ENCODE measurements at regions of chr16 and their contacts with region 1.

Region 1: DNA sequence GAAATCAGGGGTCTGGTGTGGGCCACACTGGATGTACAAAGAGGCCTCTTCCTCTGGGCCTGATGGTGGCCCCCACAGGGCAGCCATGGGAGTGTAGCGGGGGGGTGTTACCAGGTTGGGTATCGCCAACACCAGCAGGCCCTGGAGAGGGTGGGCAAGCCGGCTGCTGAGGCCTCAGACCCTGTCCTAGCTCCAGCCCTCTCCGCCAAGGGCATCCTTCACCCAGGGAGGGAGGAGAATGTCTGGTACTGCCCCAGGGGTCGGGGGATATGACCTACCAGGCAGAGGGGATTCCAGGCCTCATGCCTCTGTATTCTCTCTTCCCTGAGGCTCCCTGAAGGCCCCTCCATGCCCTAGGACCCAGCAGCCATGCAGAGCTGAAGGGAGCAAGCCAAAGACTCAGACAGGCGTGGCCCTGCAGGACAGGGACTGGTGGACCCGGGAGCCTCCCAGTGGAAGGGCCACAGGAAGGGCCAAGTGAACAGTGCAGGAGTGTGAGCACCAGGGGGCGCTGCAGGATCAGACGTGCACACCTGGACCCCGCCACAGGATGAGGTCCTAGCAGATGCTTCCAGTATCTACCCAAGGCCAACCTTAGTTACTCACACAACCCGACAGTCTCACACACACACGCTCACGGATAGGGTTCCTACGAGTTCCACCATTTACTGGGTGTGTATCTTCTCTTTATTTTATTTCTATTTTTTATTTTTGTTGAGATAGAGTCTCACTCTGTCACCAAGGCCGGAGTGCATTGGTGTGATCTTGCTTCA is 10.9 kb upstream of the CES4A start:
- DNase-seq: peak; percentile 89 to 91
- H3K4me3 ChIP-seq: no peak overlapping the region
- H3K27ac ChIP-seq: no peak overlapping the region
- H3K4me1 ChIP-seq: peaks cover 0 to 13% (median 0%) of the 10 kb centered on the region in 4 donors
- H3K27me3 ChIP-seq: peaks cover 0 to 17% of the 10 kb centered on the region in 2 donors
- CTCF ChIP-seq: peak; percentile 95 to 99

Region 2: DNA sequence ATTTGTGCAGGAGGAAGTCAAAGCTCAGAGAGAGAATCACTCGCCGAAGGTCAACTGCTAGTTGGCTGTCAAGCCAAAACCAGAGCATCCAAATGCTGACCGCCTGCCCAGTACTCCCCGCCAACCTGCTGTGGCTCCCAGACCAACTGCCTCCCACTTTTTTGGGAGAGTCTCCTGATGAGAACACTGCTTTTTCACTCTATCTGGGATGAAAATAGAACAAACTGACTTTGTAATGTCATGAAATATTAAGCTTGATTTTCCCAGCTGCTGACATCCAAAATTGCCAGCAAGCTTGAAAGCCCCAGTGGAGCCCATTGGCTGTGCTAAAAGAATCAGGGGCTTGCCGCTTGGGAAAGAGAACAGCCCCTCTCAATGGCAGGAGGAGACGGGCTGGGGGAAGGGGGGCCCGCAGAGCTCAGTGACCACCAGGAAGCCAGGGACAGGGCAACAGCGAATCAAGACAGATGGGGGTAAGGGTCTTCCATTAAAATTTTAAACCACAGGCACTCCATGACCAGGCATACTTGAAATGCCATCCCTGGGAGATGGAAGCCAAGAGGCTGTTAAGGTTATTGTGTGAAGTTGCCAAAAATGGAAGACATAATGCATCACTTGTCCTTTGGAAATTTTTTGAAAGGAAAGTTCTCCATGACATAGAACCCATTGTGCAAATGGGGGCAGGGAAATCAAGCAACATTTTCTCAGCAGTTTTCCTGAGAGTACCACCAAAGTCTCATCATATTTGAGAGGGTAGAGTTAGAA is 736.7 kb before region 1 on chr16:
- intact Hi-C with region 1: no loop called
- DNase-seq: no peak
- H3K4me3 ChIP-seq: no peak overlapping the region
- H3K27ac ChIP-seq: no peak overlapping the region
- H3K4me1 ChIP-seq: no peaks in the 10 kb centered on the region
- H3K27me3 ChIP-seq: no peaks in the 10 kb centered on the region
- CTCF ChIP-seq: no peak

Region 3: GRCh38 chr16:67154578-67155294 is 177.2 kb after region 1 on chr16:
- intact Hi-C with region 1: loop called (anchors 1 kb)
- DNase-seq: no peak
- H3K4me3 ChIP-seq: peak overlapping the region in 1 of 2 donors; percentile 26
- H3K27ac ChIP-seq: no peak overlapping the region
- H3K4me1 ChIP-seq: peaks cover 0 to 47% (median 33%) of the 10 kb centered on the region in 4 donors
- H3K27me3 ChIP-seq: peaks cover 0 to 4% of the 10 kb centered on the region in 2 donors
- CTCF ChIP-seq: no peak

Region 4: GRCh38 chr16:67183627-67184328 is 206.3 kb after region 1 on chr16 and contains the start of gene MATCAP1:
- intact Hi-C with region 1: loop called (anchors 10 kb)
- DNase-seq: peak; percentile 97
- H3K4me3 ChIP-seq: peak within 1 kb of the TSS; percentile 66 to 90
- H3K27ac ChIP-seq: peak within 1 kb of the TSS; percentile 84 to 97
- H3K4me1 ChIP-seq: peaks cover 0 to 34% (median 28%) of the 10 kb centered on the region in 4 donors
- H3K27me3 ChIP-seq: no peaks in the 10 kb centered on the region
- CTCF ChIP-seq: no peak